Activated CD4-positive, alpha-beta T cell treated with anti-CD3 and anti-CD28 coated beads, Interleukin-2, amount 10 ng/mL, durations not matched to agents 24 days and 14 days (primary cell): ENCODE measurements at regions of chr2 and their contacts with region 1.

Region 1: DNA sequence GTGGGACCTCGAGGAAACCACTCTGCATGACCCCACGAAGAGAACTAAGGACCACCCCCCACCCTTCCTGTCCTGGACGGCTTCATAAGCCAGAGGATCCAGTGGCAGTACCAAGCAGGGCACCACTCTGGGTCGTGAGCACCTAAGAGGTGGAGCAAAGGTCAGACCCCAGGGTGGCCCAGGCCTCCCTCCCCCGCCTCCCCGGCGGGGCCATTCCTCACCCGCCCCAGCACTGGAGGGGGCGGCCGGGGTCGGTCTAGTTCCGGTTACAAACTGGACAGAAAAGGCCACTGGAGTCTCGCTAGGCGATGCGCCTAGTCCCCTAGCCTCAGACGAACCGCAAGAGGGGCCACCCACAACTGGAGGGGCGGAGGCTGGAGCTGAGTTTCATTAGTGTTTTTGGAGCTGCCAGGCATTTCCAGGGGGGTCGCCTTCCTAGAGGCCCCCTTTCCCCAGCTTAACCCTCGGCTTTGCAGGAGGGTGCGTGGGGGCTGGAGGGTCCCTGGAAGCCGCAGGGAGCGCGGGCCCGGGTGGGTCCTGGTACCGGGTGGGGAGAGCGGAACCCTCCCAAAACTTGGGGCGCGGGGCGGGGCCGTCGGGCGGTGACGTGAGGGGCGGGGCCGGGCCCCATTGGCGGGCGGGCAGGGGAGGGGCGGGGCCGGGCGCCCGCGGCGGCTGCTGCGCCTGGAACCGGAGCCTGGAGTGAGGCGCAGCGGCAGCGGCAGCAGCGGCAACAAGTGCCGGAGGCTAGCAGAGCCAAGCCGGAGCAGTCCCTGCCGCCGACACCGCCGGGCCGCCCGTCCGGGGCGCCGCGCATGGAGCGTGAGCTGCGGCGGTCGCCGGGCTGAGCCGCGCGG is at the start of gene B3GNT2:
- DNase-seq: peak; percentile 94
- H3K4me3 Mint-ChIP-seq: peak within 1 kb of the TSS; percentile 89
- H3K27ac Mint-ChIP-seq: peak within 1 kb of the TSS; percentile 92
- H3K4me1 Mint-ChIP-seq: peaks cover 34% of the 10 kb centered on the region
- H3K27me3 Mint-ChIP-seq: peaks cover 5% of the 10 kb centered on the region
- total RNA-seq, gene B3GNT2: 30.4 and 30.9 TPM in 2 replicates

Region 2: DNA sequence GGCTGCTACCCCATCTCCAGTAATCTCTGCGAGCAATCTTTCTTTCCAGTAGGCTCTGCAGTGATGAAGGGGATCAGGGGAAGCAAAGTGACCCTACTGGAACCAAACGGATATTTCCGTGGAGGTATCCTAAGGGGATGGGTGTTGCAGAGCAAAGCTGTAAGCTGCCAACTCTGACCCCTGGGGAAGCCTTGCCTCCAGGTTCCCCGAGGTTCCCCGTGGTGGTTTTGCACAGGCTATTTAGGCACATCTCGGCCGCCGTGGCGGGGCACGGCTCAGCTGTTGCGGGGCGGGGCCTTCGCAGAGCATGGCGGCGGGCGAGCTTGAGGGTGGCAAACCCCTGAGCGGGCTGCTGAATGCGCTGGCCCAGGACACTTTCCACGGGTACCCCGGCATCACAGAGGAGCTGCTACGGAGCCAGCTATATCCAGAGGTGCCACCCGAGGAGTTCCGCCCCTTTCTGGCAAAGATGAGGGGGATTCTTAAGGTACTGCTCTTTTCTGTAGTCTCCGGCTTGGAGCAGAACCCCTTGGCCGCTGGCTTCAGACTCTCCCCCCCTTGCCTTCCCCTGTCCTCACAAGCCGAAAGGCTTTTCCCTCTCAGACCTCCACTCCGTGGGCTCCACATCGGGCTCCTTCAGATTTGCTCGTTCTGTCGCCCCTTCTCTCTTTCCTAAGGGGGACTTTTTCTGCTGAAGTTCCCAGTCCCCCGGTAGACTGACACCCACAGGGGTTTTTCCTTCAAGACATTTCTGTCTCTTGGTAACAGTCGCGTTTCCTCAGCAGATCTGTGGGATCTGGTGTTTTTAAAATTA is 290.1 kb before region 1 on chr2 and contains the start of gene COMMD1:
- intact Hi-C with region 1: loop called (anchors 5 kb)
- DNase-seq: peak; percentile 95
- H3K4me3 Mint-ChIP-seq: peak within 1 kb of the TSS; percentile 89
- H3K27ac Mint-ChIP-seq: peak within 1 kb of the TSS; percentile 82
- H3K4me1 Mint-ChIP-seq: peaks cover 10% of the 10 kb centered on the region
- H3K27me3 Mint-ChIP-seq: no peaks in the 10 kb centered on the region
- total RNA-seq, gene COMMD1: 27.2 and 27.6 TPM in 2 replicates

Region 3: GRCh38 chr2:62156861-62157496 is 38.7 kb before region 1 on chr2:
- intact Hi-C with region 1: no loop called
- DNase-seq: no peak
- H3K4me3 Mint-ChIP-seq: no peak overlapping the region
- H3K27ac Mint-ChIP-seq: no peak overlapping the region
- H3K4me1 Mint-ChIP-seq: no peaks in the 10 kb centered on the region
- H3K27me3 Mint-ChIP-seq: no peaks in the 10 kb centered on the region

Region 4: GRCh38 chr2:62306751-62307468 is 111.3 kb after region 1 on chr2:
- intact Hi-C with region 1: loop called (anchors 1 kb)
- DNase-seq: peak; percentile 82
- H3K4me3 Mint-ChIP-seq: peak overlapping the region; percentile 60
- H3K27ac Mint-ChIP-seq: peak overlapping the region; percentile 94
- H3K4me1 Mint-ChIP-seq: peaks cover 71% of the 10 kb centered on the region
- H3K27me3 Mint-ChIP-seq: peaks cover 1% of the 10 kb centered on the region

Region 5: DNA sequence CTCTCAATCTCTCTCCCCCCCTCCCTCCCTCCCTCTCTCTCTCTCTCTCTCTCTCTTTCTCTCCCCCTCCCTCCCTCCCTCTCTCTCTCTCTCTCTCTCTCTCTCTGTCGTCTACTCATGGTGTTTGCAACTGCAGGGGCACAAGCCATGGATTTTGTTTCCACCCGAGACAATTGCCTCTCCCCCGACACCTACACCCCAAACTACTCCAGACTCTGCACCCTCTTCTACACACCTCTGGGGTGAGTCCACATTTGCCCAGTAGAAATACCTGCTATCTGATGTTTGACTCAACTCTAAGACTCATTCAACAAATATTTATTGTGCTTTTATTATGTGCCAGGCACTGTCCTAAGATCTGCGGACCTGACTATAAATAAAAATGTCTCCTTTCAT is 216.7 kb after region 1 on chr2:
- intact Hi-C with region 1: loop called (anchors 1 kb)
- DNase-seq: no peak
- H3K4me3 Mint-ChIP-seq: no peak overlapping the region
- H3K27ac Mint-ChIP-seq: peak overlapping the region; percentile 59
- H3K4me1 Mint-ChIP-seq: peaks cover 15% of the 10 kb centered on the region
- H3K27me3 Mint-ChIP-seq: no peaks in the 10 kb centered on the region

Region 6: DNA sequence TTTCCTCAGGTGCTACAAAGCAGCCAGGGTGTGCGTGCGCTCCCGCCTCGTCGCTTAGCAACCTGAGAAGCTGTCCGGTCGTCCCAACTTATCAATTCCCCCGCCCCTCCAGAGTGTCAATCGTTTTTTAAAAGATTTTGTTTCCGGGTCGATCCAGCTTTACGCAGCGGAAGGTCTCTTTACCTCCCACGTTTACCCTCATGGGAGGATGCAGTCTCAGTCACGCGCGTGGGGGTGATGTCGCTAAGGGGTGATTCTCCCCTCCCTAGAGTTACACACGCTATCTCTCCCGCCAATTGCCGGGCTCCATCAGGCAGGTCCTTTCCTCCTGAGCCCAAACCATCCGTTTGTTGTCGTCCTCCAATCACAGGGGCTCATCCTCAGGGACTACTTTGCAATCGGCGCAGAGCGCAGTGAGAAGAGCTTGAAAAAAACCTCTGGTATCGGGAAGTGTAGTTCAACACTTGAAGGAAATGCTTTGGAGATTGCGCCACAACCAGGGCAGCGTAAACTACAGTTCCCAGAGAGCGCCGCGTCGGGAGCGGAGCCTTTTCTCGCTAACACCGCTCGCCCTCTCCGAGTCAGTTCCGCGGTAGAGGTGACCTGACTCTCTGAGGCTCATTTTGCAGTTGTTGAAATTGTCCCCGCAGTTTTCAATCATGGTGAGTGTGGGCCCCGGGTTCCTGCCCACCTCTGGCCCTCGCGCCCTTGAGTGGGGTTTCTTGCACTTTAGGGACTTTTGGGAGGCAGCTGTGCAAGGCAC is 1392.9 kb after region 1 on chr2 and contains the starts of genes MDH1 and WDPCP:
- intact Hi-C with region 1: loop called (anchors 2 kb)
- DNase-seq: peak; percentile 97
- H3K4me3 Mint-ChIP-seq: peak within 1 kb of the TSS; percentile 98
- H3K27ac Mint-ChIP-seq: peak within 1 kb of the TSS; percentile 92
- H3K4me1 Mint-ChIP-seq: peaks cover 32% of the 10 kb centered on the region
- H3K27me3 Mint-ChIP-seq: no peaks in the 10 kb centered on the region
- total RNA-seq, gene MDH1: 195 and 208 TPM in 2 replicates
- total RNA-seq, gene WDPCP: 6.0 and 8.9 TPM in 2 replicates